A673 (cell line): ENCODE measurements at regions of chr12 and their contacts with region 1.

Region 1: GRCh38 chr12:56657416-56658379 is 11.9 kb upstream of the ATP5F1B start:
- DNase-seq: no peak
- H3K4me3 ChIP-seq: no peak overlapping the region
- H3K27ac ChIP-seq: no peak overlapping the region
- H3K4me1 ChIP-seq: no peaks in the 10 kb centered on the region
- H3K27me3 ChIP-seq: no peaks in the 10 kb centered on the region
- CTCF ChIP-seq: no peak

Region 2: GRCh38 chr12:56461235-56462159 is 196.2 kb before region 1 on chr12:
- CTCF ChIA-PET with region 1: no interaction called
- POLR2A ChIA-PET with region 1: no interaction called
- intact Hi-C with region 1: no loop called
- DNase-seq: no peak
- H3K4me3 ChIP-seq: no peak overlapping the region
- H3K27ac ChIP-seq: no peak overlapping the region
- H3K4me1 ChIP-seq: no peaks in the 10 kb centered on the region
- H3K27me3 ChIP-seq: no peaks in the 10 kb centered on the region
- CTCF ChIP-seq: no peak

Region 3: DNA sequence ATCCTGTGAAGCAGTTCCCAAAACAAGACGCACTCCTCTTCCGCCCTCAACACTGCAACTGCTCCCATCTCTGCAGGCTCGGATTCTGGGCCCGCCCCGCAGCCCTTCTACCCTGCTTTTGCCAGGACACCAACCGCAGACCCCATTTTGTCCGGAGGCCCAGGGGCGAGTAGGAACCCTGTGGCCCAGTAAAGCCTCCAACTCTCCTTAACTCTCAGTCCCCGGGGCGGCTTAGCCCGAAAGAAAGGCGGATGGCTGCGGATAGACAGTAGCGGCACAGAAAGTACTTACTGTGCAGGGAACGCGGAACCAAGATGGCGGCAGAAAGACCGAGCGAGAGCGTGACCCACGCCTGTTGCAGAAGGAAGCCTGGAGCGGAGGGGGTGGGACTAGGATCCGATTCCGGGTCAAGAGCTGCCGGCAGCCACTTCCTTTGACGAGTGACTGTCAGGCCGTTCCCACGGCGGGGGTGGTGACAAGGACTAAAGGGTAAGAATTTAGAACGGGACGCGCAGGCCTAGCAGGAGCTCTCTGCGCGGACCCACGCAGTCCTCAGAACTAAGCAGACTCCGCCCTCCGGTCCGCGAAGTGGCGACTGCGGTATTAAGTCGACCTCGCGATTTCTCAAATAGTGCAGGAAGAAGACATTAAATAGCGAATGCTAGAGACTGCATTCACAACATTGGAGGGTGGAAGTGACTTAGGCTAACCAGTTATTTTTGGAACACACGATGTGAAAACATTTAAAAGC is 67.4 kb after region 1 on chr12 and contains the start of gene NACA:
- CTCF ChIA-PET with region 1: no interaction called
- POLR2A ChIA-PET with region 1: interaction called, 13 read pairs
- intact Hi-C with region 1: no loop called
- DNase-seq: peak; percentile 99
- H3K4me3 ChIP-seq: peak within 1 kb of the TSS; percentile 89
- H3K27ac ChIP-seq: peak within 1 kb of the TSS; percentile 96
- H3K4me1 ChIP-seq: peaks cover 34% of the 10 kb centered on the region
- H3K27me3 ChIP-seq: no peaks in the 10 kb centered on the region
- CTCF ChIP-seq: no peak
- total RNA-seq, gene NACA: 906 and 908 TPM in 2 replicates